ENCODE measurements at regions of chr19 and their contacts with region 1.

Region 1: GRCh38 chr19:45768984-45769782 is at the start of gene SIX5:
- DNase-seq: peak; percentile 99
- H3K4me3 ChIP-seq: peak within 1 kb of the TSS; percentile 77
- H3K27ac ChIP-seq: peak within 1 kb of the TSS; percentile 97
- H3K4me1 ChIP-seq: peaks cover 8% of the 10 kb centered on the region
- H3K27me3 ChIP-seq: no peaks in the 10 kb centered on the region
- CTCF ChIP-seq: no peak
- total RNA-seq, gene SIX5: 11.0 to 15.8 TPM

Region 2: GRCh38 chr19:45692187-45693105 is 76.7 kb before region 1 on chr19 and contains the start of gene QPCTL:
- intact Hi-C with region 1: loop called (anchors 5 kb)
- DNase-seq: peak; percentile 97
- H3K4me3 ChIP-seq: peak within 1 kb of the TSS; percentile 97
- H3K27ac ChIP-seq: peak within 1 kb of the TSS; percentile 93
- H3K4me1 ChIP-seq: peaks cover 4% of the 10 kb centered on the region
- H3K27me3 ChIP-seq: no peaks in the 10 kb centered on the region
- CTCF ChIP-seq: no peak
- total RNA-seq, gene QPCTL: 10.7 to 11.2 TPM

Region 3: GRCh38 chr19:45717166-45717982 is 51.8 kb before region 1 on chr19:
- intact Hi-C with region 1: loop called (anchors 5 kb)
- DNase-seq: peak; percentile 99
- H3K4me3 ChIP-seq: peak overlapping the region; percentile 46
- H3K27ac ChIP-seq: peak overlapping the region; percentile 71
- H3K4me1 ChIP-seq: no peaks in the 10 kb centered on the region
- H3K27me3 ChIP-seq: no peaks in the 10 kb centered on the region
- CTCF ChIP-seq: no peak

Region 4: GRCh38 chr19:45848922-45849321 is 79.7 kb after region 1 on chr19:
- intact Hi-C with region 1: no loop called
- DNase-seq: no peak
- H3K4me3 ChIP-seq: no peak overlapping the region
- H3K27ac ChIP-seq: no peak overlapping the region
- H3K4me1 ChIP-seq: no peaks in the 10 kb centered on the region
- H3K27me3 ChIP-seq: no peaks in the 10 kb centered on the region
- CTCF ChIP-seq: no peak

Measured in colonic mucosa (tissue), 4 donors.